ENCODE measurements at regions of chr7 and their contacts with region 1.

Region 1: GRCh38 chr7:134690016-134690415 is 43.4 kb downstream of the BPGM start:
- DNase-seq: peak in 1 of 2 experiments; percentile 40
- ATAC-seq: peak; percentile 51 to 68; a peak in 3 of 6 replicates
- H3K4me3 ChIP-seq: no peak overlapping the region
- H3K27ac ChIP-seq: peak overlapping the region in 1 of 2 experiments; percentile 34; a peak in 1 of 6 replicates
- H3K4me1 ChIP-seq: no peaks in the 10 kb centered on the region
- CTCF ChIP-seq: peak; percentile 60
- EP300 ChIP-seq: no peak
- POLR2A ChIP-seq: no peak
- RAD21 ChIP-seq: peak; percentile 66 to 79

Region 2: DNA sequence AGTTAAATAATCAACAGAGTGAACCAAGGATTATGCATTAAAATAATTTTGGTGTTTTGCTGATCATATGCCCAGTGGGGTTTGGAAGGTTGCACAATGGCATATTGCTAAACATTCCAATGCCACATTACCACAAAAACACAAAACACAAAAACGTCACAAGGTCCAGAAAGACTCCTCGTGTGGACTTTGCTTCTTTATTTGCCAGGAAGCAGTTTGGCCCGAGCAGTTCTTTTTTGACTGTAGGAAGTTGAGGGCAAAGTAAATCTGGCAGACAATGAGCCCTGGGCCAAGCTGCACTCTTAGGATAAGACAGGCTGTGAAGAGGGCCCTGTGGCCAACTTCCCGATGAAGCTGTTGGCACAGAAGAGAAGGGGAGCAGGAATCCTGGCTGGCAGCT is 334.1 kb before region 1 on chr7:
- CTCF ChIA-PET with region 1: interaction called, 16 read pairs
- POLR2A ChIA-PET with region 1: no interaction called
- DNase-seq: peak in 1 of 2 experiments; percentile 51
- ATAC-seq: peak in 1 of 2 experiments; percentile 24; a peak in 4 of 6 replicates
- H3K4me3 ChIP-seq: no peak overlapping the region
- H3K27ac ChIP-seq: peak overlapping the region; percentile 56 to 60; a peak in 5 of 6 replicates
- H3K4me1 ChIP-seq: peaks cover 23% of the 10 kb centered on the region
- CTCF ChIP-seq: no peak
- EP300 ChIP-seq: no peak; a peak in 1 of 5 replicates
- POLR2A ChIP-seq: no peak
- RAD21 ChIP-seq: no peak

Region 3: DNA sequence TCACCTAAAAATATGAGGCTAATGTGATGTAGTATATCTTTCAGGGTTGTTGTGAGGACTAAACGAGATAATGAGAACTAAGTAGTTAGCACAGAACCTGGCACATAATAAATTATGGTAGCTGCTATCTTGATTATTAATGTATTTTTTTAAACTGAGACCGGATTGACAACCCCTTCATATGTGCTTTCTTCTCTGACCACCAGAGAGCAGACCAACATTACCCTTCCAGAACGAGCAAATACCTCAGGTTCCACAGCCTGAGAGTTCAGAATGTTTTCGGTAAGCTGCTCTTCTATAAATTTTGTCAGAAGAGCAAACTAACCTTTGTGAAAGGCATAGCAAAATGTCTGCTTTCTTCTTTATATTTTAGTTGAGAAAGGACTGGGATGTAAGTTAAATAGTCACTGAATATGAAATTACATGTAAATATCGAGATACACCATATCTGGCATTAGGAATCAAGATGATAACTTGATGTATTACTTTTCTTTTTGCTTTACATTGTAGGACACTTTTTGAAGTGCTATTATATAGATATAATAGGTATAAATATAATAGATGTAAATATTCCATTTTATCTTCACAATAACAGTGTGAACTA is 57.0 kb before region 1 on chr7:
- CTCF ChIA-PET with region 1: interaction called, 18 read pairs
- POLR2A ChIA-PET with region 1: interaction called, 4 read pairs
- DNase-seq: peak; percentile 67 to 73
- ATAC-seq: peak; percentile 78 to 94; a peak in 5 of 6 replicates
- H3K4me3 ChIP-seq: no peak overlapping the region
- H3K27ac ChIP-seq: no peak overlapping the region
- H3K4me1 ChIP-seq: no peaks in the 10 kb centered on the region
- CTCF ChIP-seq: peak; percentile 89
- EP300 ChIP-seq: no peak
- POLR2A ChIP-seq: no peak
- RAD21 ChIP-seq: peak; percentile 89 to 95

Region 4: GRCh38 chr7:134669845-134670373 is 20.1 kb before region 1 on chr7:
- CTCF ChIA-PET with region 1: interaction called, 19 read pairs
- POLR2A ChIA-PET with region 1: no interaction called
- DNase-seq: peak; percentile 72 to 73
- ATAC-seq: peak; percentile 84 to 94
- H3K4me3 ChIP-seq: no peak overlapping the region
- H3K27ac ChIP-seq: peak overlapping the region; percentile 42 to 62; a peak in 5 of 6 replicates
- H3K4me1 ChIP-seq: peaks cover 16% of the 10 kb centered on the region
- CTCF ChIP-seq: no peak
- EP300 ChIP-seq: no peak
- POLR2A ChIP-seq: no peak
- RAD21 ChIP-seq: no peak

Region 5: DNA sequence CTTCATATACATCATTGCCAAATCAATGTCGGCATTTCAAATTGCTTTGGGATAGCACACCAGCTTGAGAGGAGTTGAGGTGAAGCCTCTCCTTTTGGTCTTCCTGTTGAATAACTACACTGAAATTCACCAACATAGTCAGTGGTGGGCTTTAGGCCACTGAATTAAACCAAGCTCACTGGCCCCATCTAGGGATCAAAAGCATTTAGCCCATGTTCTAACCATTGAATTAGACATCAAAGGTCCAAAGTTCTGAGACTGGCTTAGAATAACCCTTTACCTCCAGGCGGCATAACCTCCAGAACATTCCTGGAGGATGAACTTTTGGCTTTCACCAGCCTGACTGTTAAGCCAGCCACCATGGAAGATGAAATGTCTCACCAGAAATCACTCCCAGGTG is 11.3 kb after region 1 on chr7:
- CTCF ChIA-PET with region 1: interaction called, 42 read pairs
- POLR2A ChIA-PET with region 1: no interaction called
- DNase-seq: peak; percentile 38 to 58
- ATAC-seq: peak; percentile 48 to 78; a peak in 3 of 6 replicates
- H3K4me3 ChIP-seq: no peak overlapping the region
- H3K27ac ChIP-seq: no peak overlapping the region
- H3K4me1 ChIP-seq: peaks cover 14% of the 10 kb centered on the region
- CTCF ChIP-seq: peak; percentile 44
- EP300 ChIP-seq: no peak
- POLR2A ChIP-seq: no peak
- RAD21 ChIP-seq: peak; percentile 41 to 70; a peak in 4 of 5 replicates

Region 6: GRCh38 chr7:134954197-134955082 is 264.4 kb after region 1 on chr7:
- CTCF ChIA-PET with region 1: interaction called, 83 read pairs
- POLR2A ChIA-PET with region 1: interaction called, 3 read pairs
- DNase-seq: peak; percentile 22 to 51
- ATAC-seq: peak in 1 of 2 experiments; percentile 66; a peak in 2 of 6 replicates
- H3K4me3 ChIP-seq: no peak overlapping the region
- H3K27ac ChIP-seq: no peak overlapping the region; a peak in 1 of 6 replicates
- H3K4me1 ChIP-seq: no peaks in the 10 kb centered on the region
- CTCF ChIP-seq: peak; percentile 86
- EP300 ChIP-seq: no peak
- POLR2A ChIP-seq: no peak
- RAD21 ChIP-seq: peak; percentile 83 to 87

Region 7: GRCh38 chr7:135170274-135170997 is 480.4 kb after region 1 on chr7 and contains the start of gene CYREN:
- CTCF ChIA-PET with region 1: interaction called, 14 read pairs
- POLR2A ChIA-PET with region 1: interaction called, 4 read pairs
- DNase-seq: peak; percentile 93 to 97
- ATAC-seq: peak; percentile 93 to 95
- H3K4me3 ChIP-seq: peak within 1 kb of the TSS; percentile 87
- H3K27ac ChIP-seq: peak within 1 kb of the TSS; percentile 96 to 99
- H3K4me1 ChIP-seq: peaks cover 25% of the 10 kb centered on the region
- CTCF ChIP-seq: peak; percentile 84
- EP300 ChIP-seq: no peak; a peak in 1 of 5 replicates
- POLR2A ChIP-seq: peak; percentile 46
- RAD21 ChIP-seq: peak; percentile 67 to 84
- polyA plus RNA-seq, gene CYREN: 69.1 and 70.4 TPM in 2 replicates

Measured in A549 (cell line).